ENCODE measurements at regions of chr11 and their contacts with region 1.

Region 1: GRCh38 chr11:47766305-47767227 is 575 bp downstream of the FNBP4 start:
- DNase-seq: peak; percentile 85
- H3K4me3 Mint-ChIP-seq: peak overlapping the region; percentile 99
- H3K27ac Mint-ChIP-seq: peak overlapping the region; percentile 100
- H3K4me1 Mint-ChIP-seq: peaks cover 18% of the 10 kb centered on the region
- H3K27me3 Mint-ChIP-seq: no peaks in the 10 kb centered on the region

Region 2: GRCh38 chr11:47176328-47177228 is 590.0 kb before region 1 on chr11 and contains the start of gene ARFGAP2:
- CTCF ChIA-PET with region 1: no interaction called
- intact Hi-C with region 1: loop called (anchors 1 kb)
- DNase-seq: peak; percentile 97
- H3K4me3 Mint-ChIP-seq: peak within 1 kb of the TSS; percentile 97
- H3K27ac Mint-ChIP-seq: peak within 1 kb of the TSS; percentile 99
- H3K4me1 Mint-ChIP-seq: peaks cover 41% of the 10 kb centered on the region
- H3K27me3 Mint-ChIP-seq: no peaks in the 10 kb centered on the region
- total RNA-seq, gene ARFGAP2: 75.1 to 78.7 TPM

Region 3: DNA sequence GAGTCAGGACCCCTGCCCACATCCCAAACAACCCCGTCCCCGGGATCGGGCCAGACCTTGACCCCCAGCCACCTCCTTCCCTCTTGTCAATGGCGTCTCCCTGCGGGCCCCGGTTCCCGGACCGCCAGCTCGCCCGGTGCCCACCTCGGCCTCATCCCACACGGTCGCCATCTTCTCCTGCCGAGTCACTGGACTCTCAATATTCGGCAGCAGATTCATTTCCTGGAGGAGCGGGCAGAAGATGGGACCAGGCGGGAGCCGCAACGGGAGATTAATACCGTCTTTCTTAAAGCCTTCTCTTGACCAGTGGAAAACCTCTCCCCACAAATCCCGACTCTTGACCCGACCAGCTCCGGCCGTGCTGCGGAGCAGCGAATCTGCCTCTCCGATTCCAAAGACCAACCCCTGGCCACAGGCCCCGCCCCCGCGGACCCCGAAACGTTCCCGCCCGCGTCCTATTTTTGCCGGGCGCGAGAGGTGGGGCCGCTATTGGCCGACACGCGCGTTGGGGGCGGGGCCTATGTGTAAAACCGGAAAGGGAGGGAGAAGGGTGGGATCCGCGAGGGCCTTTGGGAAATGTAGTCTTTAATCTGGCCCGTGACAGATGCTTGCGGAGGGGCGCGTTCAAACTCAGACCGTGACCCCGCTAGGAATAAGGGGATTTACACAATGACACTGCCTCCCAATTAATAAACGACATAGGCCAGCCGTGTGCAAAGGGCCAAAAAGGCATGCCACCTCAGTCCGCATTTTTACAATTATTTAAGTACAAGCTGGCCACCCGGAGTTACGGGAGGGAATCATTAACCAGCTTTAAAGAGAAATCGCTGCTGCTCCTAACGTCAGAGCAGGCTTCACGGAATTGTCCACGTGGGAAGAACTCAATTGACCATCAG is 340.3 kb before region 1 on chr11 and contains the start of gene PSMC3:
- CTCF ChIA-PET with region 1: no interaction called
- intact Hi-C with region 1: loop called (anchors 1 kb)
- DNase-seq: peak; percentile 99
- H3K4me3 Mint-ChIP-seq: peak within 1 kb of the TSS; percentile 98
- H3K27ac Mint-ChIP-seq: peak within 1 kb of the TSS; percentile 98
- H3K4me1 Mint-ChIP-seq: peaks cover 26% of the 10 kb centered on the region
- H3K27me3 Mint-ChIP-seq: no peaks in the 10 kb centered on the region
- total RNA-seq, gene PSMC3: 127 to 129 TPM

Region 4: GRCh38 chr11:47443042-47443700 is 323.4 kb before region 1 on chr11:
- CTCF ChIA-PET with region 1: no interaction called
- intact Hi-C with region 1: no loop called
- DNase-seq: no peak
- H3K4me3 Mint-ChIP-seq: no peak overlapping the region
- H3K27ac Mint-ChIP-seq: no peak overlapping the region
- H3K4me1 Mint-ChIP-seq: no peaks in the 10 kb centered on the region
- H3K27me3 Mint-ChIP-seq: no peaks in the 10 kb centered on the region

Region 5: DNA sequence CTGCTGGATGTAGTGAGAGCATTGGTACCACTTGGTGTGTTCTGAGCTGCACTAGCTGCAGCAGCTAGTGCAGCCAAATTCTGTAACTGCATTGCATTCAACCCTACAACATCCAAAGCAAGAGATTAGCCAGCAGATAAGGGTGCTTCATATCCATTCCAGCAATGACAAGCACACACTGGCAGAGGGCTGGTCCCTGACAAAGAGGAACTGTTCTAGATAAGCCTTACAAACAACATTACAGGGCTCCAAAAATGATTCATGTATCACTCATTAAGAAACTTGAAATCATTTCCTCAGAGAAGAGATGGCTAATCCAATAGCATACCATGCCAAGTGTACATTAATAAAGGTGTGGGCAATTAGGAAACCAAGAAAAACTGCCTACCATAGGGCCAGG is 289.2 kb before region 1 on chr11:
- CTCF ChIA-PET with region 1: no interaction called
- intact Hi-C with region 1: no loop called
- DNase-seq: peak; percentile 30
- H3K4me3 Mint-ChIP-seq: no peak overlapping the region
- H3K27ac Mint-ChIP-seq: peak overlapping the region; percentile 46
- H3K4me1 Mint-ChIP-seq: peaks cover 12% of the 10 kb centered on the region
- H3K27me3 Mint-ChIP-seq: no peaks in the 10 kb centered on the region

Region 6: DNA sequence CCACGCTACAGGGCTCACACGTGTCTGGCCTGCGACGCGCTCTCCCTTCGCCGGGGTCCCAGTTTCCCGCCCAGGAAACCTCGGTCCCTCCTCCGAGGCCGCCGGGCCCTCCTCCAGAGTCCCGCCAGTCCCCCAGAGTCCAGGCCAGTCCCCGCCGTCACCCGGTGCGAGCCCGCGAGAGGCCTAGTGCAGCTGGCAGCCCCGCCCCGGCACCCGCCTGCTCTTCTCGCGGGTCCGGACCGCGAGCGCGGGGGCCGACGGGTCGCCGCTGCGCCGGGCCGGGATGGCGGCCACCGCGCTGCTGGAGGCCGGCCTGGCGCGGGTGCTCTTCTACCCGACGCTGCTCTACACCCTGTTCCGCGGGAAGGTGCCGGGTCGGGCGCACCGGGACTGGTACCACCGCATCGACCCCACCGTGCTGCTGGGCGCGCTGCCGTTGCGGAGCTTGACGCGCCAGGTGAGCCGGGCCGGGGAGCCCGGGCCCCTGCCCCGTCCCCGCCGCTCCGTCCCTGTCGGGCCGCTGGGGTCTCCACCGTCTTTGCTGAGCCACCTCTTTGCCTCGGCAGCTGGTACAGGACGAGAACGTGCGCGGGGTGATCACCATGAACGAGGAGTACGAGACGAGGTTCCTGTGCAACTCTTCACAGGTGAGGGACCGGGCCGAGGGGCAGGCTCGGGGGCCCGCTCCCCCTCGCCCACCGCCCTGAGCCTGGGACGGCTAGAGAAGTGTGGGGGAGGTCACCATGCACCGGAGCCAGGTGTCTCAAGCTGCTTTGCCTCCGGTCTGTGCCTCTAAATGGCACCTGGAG is 201.0 kb before region 1 on chr11 and contains the start of gene PTPMT1:
- CTCF ChIA-PET with region 1: no interaction called
- intact Hi-C with region 1: loop called (anchors 1 kb)
- DNase-seq: peak; percentile 82
- H3K4me3 Mint-ChIP-seq: peak within 1 kb of the TSS; percentile 83
- H3K27ac Mint-ChIP-seq: peak within 1 kb of the TSS; percentile 75
- H3K4me1 Mint-ChIP-seq: peaks cover 26% of the 10 kb centered on the region
- H3K27me3 Mint-ChIP-seq: no peaks in the 10 kb centered on the region
- total RNA-seq, gene PTPMT1: 46.9 to 49.2 TPM

Region 7: DNA sequence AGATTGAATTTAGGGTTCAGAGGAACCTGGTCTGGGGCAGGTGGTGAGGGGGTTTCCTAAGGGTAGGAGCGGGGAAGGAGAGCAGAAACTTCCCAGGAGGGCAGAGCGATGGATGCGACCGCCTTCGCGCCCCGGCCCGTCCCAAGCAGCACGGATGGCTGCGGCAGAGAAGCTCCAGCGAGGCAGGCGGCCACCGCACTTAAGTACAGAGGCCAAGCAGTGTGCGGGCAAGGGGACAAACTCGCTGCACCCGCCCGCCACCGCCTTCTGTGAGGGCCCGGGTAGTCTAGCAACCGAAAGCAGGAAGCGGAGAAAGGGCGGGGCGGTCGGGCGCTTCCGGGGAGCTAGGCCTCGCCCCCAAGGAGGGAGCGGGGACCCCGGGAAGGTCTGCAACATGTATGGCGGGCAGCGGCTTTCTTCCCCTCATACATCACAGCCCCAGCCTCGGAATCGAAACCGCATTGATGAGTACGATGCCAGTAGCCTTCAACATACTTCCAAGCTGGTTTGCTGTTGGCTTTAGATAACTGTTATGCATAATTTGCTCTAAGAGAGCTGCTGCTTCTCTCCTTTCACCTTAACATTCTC is 51.4 kb before region 1 on chr11 and contains the start of gene AGBL2:
- CTCF ChIA-PET with region 1: interaction called, 3 read pairs
- intact Hi-C with region 1: loop called (anchors 1 kb)
- DNase-seq: peak; percentile 87
- H3K4me3 Mint-ChIP-seq: peak within 1 kb of the TSS; percentile 91
- H3K27ac Mint-ChIP-seq: peak within 1 kb of the TSS; percentile 94
- H3K4me1 Mint-ChIP-seq: peaks cover 16% of the 10 kb centered on the region
- H3K27me3 Mint-ChIP-seq: no peaks in the 10 kb centered on the region
- total RNA-seq, gene AGBL2: 1.3 to 2.2 TPM

Region 8: DNA sequence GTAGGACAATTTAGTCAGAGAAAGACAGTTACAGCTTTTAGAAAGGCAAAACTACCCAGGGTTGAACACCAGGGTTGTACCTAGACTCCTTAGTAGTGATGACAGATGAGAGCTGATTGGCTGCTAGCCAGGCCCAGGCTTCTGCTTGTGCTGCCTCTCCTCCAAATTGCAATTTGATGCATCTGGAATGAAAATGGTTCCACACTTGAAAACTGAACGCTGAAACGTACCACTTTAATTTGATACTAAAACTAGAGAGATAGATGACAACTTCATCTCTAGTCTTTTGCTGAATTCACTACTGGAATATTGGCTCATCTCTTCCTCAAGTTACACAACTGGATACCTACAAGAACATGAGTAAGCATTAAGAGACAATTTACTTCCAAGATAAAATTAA is 19.8 kb after region 1 on chr11:
- CTCF ChIA-PET with region 1: no interaction called
- intact Hi-C with region 1: no loop called
- DNase-seq: no peak
- H3K4me3 Mint-ChIP-seq: no peak overlapping the region
- H3K27ac Mint-ChIP-seq: no peak overlapping the region
- H3K4me1 Mint-ChIP-seq: no peaks in the 10 kb centered on the region
- H3K27me3 Mint-ChIP-seq: no peaks in the 10 kb centered on the region

Region 9: DNA sequence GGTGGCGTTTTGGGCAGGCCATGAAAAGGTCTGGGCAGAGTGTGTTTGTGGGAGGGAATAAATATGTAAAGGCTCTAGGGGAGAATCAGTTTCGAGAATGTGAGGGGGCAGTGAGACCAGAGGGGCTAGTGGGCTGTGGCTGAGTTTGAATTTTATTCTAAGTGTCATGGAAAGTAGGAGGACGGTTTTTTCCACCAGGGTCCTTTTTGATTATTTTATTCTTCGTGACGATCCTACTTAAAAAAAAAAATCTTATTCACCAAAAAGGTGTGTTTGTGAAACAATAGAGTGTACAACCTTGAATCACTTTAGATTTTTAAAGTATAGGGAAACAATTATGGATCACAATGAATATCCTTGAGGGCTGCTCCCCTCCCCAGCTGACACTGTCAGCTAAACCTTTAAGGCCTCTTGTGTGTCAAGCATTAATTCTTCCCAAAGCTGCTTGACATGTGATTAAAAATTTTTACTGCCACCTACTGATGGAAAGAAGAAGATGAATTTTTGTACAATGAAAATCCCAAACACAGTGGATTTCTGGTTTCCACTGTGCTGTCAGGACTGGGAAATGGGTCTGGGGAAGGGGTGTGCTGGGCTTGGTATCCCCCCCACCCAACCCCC is 342.6 kb after region 1 on chr11:
- CTCF ChIA-PET with region 1: interaction called, 3 read pairs
- intact Hi-C with region 1: loop called (anchors 2 kb)
- DNase-seq: no peak
- H3K4me3 Mint-ChIP-seq: no peak overlapping the region
- H3K27ac Mint-ChIP-seq: peak overlapping the region; percentile 75
- H3K4me1 Mint-ChIP-seq: peaks cover 46% of the 10 kb centered on the region
- H3K27me3 Mint-ChIP-seq: no peaks in the 10 kb centered on the region

Region 10: GRCh38 chr11:48172818-48173609 is 406.4 kb after region 1 on chr11:
- CTCF ChIA-PET with region 1: no interaction called
- intact Hi-C with region 1: no loop called
- DNase-seq: peak; percentile 81
- H3K4me3 Mint-ChIP-seq: no peak overlapping the region
- H3K27ac Mint-ChIP-seq: no peak overlapping the region
- H3K4me1 Mint-ChIP-seq: peaks cover 18% of the 10 kb centered on the region
- H3K27me3 Mint-ChIP-seq: no peaks in the 10 kb centered on the region